Activated CD4-positive, alpha-beta T cell treated with anti-CD3 and anti-CD28 coated beads for 36 hours (primary cell): ENCODE measurements at regions of chr1 and their contacts with region 1.

Region 1: GRCh38 chr1:45499415-45499769 is 481 bp downstream of the CCDC163 start:
- DNase-seq: peak; percentile 45
- ATAC-seq: no peak
- H3K4me3 Mint-ChIP-seq: peak overlapping the region; percentile 81
- H3K27ac Mint-ChIP-seq: peak overlapping the region; percentile 92
- H3K4me1 Mint-ChIP-seq: peaks cover 23% of the 10 kb centered on the region
- H3K27me3 Mint-ChIP-seq: no peaks in the 10 kb centered on the region

Region 2: DNA sequence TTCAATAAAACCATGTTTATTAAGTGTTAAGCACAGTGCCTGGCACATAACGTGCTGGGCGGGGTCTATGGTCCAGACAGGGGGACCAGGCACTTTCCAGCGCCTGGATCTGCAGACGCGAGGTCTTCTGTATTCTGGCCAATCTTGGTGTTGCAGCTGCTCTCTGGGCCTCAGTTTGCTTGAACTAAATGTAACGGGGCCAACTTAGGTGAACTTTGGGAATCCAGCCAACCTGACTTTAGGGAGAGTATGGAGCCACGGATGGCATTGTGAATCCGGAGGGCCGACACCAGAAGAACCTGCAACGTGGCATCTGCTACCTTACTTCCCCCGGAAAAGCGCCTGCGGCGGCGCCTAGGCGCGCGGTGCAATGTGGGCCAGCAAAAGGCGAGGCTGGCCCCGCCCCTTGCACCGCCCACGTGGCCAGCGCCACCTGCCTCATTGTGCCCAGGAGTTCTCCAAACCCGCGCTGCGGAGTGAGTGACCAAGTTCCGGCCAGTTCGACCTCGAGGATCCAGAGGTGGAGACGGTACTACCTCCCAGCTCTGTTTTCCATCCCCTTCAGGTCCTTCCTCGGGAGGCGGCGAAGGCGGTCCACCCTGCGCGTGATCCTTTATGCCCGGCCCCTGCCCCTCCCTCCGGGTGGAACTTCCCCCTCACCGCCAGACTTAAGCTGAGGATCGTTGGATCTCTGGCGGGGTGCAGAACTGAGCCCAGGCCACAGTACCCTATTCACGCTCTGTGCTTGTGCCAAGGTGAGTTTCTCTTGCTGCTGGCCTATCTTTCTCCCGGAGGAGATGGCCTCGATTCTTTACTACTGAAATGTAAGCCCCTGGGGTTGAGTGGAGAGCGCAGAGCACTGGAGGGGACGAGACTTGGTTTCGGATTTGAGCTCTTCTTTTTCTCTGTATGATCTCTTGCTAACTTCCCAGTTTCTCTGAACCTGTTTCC is 51.3 kb after region 1 on chr1 and contains the start of gene AKR1A1:
- CTCF ChIA-PET with region 1: no interaction called
- POLR2A ChIA-PET with region 1: no interaction called
- intact Hi-C with region 1: loop called (anchors 1 kb)
- DNase-seq: peak; percentile 95
- ATAC-seq: peak; percentile 94
- H3K4me3 Mint-ChIP-seq: peak within 1 kb of the TSS; percentile 94
- H3K27ac Mint-ChIP-seq: peak within 1 kb of the TSS; percentile 94
- H3K4me1 Mint-ChIP-seq: peaks cover 16% of the 10 kb centered on the region
- H3K27me3 Mint-ChIP-seq: no peaks in the 10 kb centered on the region
- total RNA-seq, gene AKR1A1: 140 to 181 TPM